Cardiac septum (tissue), 1 donor: ENCODE measurements at regions of chr20 and their contacts with region 1.

Region 1: GRCh38 chr20:63309261-63310071 is 16.5 kb downstream of the COL20A1 start:
- DNase-seq: no peak

Region 2: DNA sequence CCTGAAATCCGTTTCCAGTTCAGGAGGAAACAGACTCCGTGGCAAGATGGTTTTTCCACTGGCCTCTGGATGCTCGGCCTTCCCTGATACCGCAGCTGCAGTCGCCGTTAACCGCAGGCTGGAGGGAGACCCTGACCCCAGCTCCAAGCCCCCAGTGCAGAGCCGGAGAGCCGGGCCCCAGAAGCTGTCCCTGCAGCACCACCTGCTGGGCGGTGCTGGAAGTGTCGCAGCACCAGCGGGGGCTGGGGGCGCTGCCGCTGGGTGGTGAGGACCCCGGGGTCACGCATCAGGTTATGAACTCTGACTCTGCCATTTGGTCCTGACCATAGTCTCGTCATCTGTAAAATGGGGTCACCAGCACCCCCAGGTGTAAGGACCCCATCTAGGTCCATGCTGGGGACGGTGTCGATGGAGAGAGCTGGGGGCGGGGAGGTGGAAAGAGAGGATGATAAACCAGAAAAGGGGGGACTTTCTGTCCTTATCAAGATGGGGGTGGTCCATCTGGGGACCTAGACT is 72.4 kb after region 1 on chr20:
- intact Hi-C with region 1: loop called (anchors 1 kb)
- DNase-seq: no peak

Region 3: DNA sequence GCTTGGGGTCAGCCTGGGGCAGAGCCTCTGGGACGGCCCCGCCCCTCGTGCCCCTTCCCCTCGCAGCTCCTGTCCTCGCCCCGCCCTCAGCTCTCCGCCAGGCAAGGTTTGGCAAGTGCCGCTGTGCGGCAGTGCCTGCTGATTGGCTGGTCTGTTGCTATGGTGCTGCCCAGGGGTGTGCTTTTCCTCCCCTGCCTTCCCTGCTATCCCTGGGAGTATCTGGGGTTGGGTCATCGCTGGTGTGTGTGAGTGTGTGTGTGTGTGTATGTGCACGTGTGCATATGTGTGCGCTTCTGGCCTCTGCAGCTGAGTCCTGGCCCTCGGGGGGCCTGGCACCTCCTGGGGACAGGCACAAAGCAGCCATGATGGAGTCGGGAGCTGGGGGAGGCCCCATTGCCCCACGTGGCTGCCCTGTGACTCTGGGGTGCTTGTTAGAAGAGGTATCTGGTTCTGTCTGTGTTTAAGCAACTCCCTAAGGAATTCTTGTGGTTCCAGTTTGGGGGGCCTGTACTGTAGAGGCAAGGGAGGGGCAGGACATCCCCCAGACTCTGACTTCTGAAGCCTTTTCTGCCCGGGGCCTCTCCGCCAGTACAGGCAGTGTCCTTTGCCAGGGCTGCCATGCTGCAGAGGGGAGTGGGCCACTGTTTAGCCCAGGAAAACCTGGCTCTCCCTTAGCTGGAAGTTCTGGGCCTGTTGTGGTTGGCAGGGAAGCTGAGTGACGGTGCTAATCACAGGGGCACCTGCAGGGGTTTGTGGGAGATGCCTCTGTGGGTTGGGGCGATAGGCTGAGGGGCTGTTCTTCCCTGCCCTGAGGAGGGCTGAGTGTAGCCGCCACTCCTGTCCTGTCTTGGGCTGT is 355.6 kb after region 1 on chr20:
- intact Hi-C with region 1: no loop called
- DNase-seq: no peak

Region 4: GRCh38 chr20:63896264-63897105 is 587.0 kb after region 1 on chr20:
- intact Hi-C with region 1: no loop called
- DNase-seq: peak; percentile 81